PC-3 (cell line): ENCODE measurements at regions of chr10 and their contacts with region 1.

Region 1: DNA sequence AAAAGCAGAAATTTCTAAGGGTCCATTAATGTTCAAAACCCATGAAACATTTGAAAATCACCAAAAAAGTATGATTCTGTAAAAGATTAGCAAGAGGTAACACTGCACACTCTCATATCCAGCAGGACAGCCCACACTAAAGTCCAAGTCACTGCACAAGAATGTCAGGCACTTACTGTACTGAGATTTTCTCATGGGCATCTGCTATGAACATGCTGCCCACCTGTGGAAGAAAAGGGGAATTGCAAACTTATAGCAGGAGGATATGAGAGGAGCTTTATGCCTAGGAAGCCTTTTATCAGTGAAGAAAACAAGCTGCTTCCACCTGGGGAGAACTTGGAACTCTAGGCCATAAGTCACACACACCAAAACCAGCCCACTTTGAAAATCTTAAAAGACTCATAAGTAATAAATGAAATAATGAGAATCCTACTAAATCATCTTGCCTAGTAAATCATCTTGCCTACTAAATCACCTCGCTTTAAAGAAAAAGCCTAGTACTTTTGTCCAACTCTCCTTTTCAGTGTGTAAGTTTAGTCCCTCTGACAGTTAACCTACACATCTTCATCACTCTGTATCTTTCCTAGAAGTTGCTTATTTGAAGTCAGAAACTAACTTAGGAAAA is 46.1 kb downstream of the ARMH3 start:
- DNase-seq: peak; percentile 85
- ATAC-seq: peak; percentile 99
- H3K4me3 ChIP-seq: no peak overlapping the region
- H3K27ac ChIP-seq: no peak overlapping the region
- H3K4me1 ChIP-seq: peaks cover 5% of the 10 kb centered on the region
- H3K27me3 ChIP-seq: no peaks in the 10 kb centered on the region
- CTCF ChIP-seq: peak; percentile 88

Region 2: DNA sequence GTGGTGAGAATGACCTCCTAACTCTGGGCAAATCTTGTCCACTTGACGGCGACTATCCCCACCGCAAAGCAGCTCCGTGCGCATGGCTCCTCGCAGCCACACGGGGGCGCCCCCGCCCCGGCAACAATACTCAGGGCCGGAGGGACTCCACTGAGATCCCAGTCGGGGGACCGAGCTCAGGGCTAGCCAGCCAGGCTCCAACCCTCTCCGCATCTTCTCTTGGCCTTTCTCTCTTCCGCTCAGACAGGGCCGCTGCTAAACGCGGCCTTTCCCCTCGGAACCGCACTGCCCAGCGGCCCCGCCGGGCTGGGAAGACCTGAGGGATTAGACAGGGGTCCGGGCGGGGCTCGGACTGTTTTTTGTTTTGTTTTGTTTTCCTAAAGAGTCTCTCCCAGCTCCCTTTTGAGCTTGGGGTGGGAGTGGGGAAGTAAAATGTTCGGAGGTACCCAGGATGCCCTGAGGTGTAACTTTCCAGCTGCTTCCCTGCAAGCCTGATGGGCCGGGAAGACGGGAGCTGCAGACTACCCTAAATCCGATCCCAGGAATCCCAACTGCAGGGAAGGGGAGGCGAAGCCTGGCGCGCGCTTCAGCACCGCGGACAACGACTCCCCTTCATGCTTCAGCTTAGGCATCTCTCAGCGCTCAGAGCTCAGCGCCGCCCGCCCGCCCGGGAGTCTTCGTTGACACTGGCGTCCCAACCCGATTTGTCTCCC is 169.0 kb before region 1 on chr10:
- CTCF ChIA-PET with region 1: interaction called, 36 read pairs
- POLR2A ChIA-PET with region 1: no interaction called
- intact Hi-C with region 1: loop called (anchors 1 kb)
- DNase-seq: peak; percentile 85
- ATAC-seq: peak; percentile 88
- H3K4me3 ChIP-seq: peak overlapping the region; percentile 65
- H3K27ac ChIP-seq: no peak overlapping the region
- H3K4me1 ChIP-seq: peaks cover 7% of the 10 kb centered on the region; the same call in 1 of the 2 replicates
- H3K27me3 ChIP-seq: no peaks in the 10 kb centered on the region
- CTCF ChIP-seq: peak; percentile 92

Region 3: GRCh38 chr10:101889256-101890210 is 120.4 kb before region 1 on chr10:
- CTCF ChIA-PET with region 1: interaction called, 13 read pairs
- POLR2A ChIA-PET with region 1: no interaction called
- intact Hi-C with region 1: loop called (anchors 1 kb)
- DNase-seq: peak; percentile 76
- ATAC-seq: peak; percentile 83
- H3K4me3 ChIP-seq: no peak overlapping the region
- H3K27ac ChIP-seq: no peak overlapping the region
- H3K4me1 ChIP-seq: no peaks in the 10 kb centered on the region
- H3K27me3 ChIP-seq: no peaks in the 10 kb centered on the region
- CTCF ChIP-seq: peak; percentile 87

Region 4: DNA sequence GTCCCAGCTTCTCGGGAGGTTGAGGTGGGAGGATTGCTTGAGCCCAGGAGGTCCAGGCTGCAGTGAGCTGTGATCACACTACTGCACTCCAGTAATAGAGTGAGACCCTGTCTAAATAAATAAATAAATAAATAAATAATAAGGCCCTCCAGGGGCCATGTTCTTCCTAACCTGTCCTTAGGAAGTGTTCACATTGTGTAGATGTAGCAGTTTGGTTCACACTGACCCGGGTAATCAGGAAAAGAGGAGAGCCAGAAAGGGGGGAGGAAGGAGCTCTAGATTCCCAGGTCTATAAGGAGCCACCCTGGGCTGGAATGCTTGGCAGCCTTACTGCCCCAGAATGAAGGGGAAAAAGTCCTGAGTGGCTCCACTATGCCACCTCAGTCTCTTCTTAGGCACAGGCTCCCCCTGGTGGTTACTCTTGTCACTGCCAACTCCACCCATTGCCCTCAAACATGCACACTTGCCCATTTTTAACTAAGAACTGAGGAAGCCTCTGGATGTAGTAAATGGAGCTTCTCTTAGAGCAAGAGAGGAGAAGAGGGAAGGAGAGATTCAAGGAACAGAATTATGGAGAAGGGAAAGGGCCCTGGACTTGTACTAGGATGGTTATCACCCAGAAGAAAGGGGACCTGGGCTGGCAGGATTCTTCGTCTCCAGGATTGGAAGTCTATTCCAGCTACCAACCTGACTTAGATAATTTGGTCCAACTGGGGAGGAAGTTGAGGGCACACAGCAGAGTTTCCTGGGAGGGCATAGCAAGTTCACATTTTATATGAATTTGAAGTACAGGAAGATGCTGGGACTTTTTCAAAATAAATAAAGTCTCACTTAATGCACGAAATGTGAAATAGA is 63.0 kb after region 1 on chr10:
- CTCF ChIA-PET with region 1: interaction called, 9 read pairs
- POLR2A ChIA-PET with region 1: no interaction called
- intact Hi-C with region 1: loop called (anchors 10 kb)
- DNase-seq: peak; percentile 80
- ATAC-seq: peak; percentile 99
- H3K4me3 ChIP-seq: no peak overlapping the region
- H3K27ac ChIP-seq: no peak overlapping the region
- H3K4me1 ChIP-seq: no peaks in the 10 kb centered on the region
- H3K27me3 ChIP-seq: no peaks in the 10 kb centered on the region
- CTCF ChIP-seq: peak; percentile 88

Region 5: GRCh38 chr10:102106998-102107397 is 97.1 kb after region 1 on chr10:
- CTCF ChIA-PET with region 1: interaction called, 24 read pairs
- POLR2A ChIA-PET with region 1: no interaction called
- intact Hi-C with region 1: no loop called
- DNase-seq: no peak
- ATAC-seq: no peak
- H3K4me3 ChIP-seq: no peak overlapping the region
- H3K27ac ChIP-seq: no peak overlapping the region
- H3K4me1 ChIP-seq: no peaks in the 10 kb centered on the region
- H3K27me3 ChIP-seq: no peaks in the 10 kb centered on the region
- CTCF ChIP-seq: no peak